Activated B cell treated with CpG ODN at 0.5 μM for 24 hours (primary cell): ENCODE measurements at regions of chr1 and their contacts with region 1.

Region 1: GRCh38 chr1:183859831-183860230 is 54.9 kb downstream of the RGL1 start:
- DNase-seq: no peak
- ATAC-seq: no peak
- H3K4me3 Mint-ChIP-seq: no peak overlapping the region
- H3K27ac Mint-ChIP-seq: no peak overlapping the region
- H3K4me1 Mint-ChIP-seq: no peaks in the 10 kb centered on the region
- H3K27me3 Mint-ChIP-seq: peaks cover 4% of the 10 kb centered on the region
- CTCF ChIP-seq: no peak

Region 2: GRCh38 chr1:183896466-183897048 is 36.7 kb after region 1 on chr1:
- CTCF ChIA-PET with region 1: no interaction called
- POLR2A ChIA-PET with region 1: no interaction called
- intact Hi-C with region 1: loop called (anchors 5 kb)
- DNase-seq: no peak
- ATAC-seq: peak; percentile 31
- H3K4me3 Mint-ChIP-seq: no peak overlapping the region
- H3K27ac Mint-ChIP-seq: peak overlapping the region; percentile 47
- H3K4me1 Mint-ChIP-seq: peaks cover 31% of the 10 kb centered on the region
- H3K27me3 Mint-ChIP-seq: peaks cover 2% of the 10 kb centered on the region
- CTCF ChIP-seq: no peak